Activated T-helper 2 cell treated with anti-CD3 and anti-CD28 coated beads, Interferon-gamma antibody, Interleukin-2, Interleukin-4, amounts not matched to agents 10 μg/mL and 5 μg/mL and 100 μg/mL, durations not matched to agents 14 hours and 24 hours and 36 hours (primary cell): ENCODE measurements at regions of chr6 and their contacts with region 1.

Region 1: GRCh38 chr6:41735427-41736356 is at the start of gene TFEB:
- DNase-seq: peak; percentile 92
- H3K4me3 Mint-ChIP-seq: peak within 1 kb of the TSS; percentile 72
- H3K27ac Mint-ChIP-seq: no peak within 1 kb of the TSS
- H3K4me1 Mint-ChIP-seq: peaks cover 22% of the 10 kb centered on the region
- H3K27me3 Mint-ChIP-seq: no peaks in the 10 kb centered on the region
- total RNA-seq, gene TFEB: 11.2 and 13.4 TPM in 2 replicates

Region 2: DNA sequence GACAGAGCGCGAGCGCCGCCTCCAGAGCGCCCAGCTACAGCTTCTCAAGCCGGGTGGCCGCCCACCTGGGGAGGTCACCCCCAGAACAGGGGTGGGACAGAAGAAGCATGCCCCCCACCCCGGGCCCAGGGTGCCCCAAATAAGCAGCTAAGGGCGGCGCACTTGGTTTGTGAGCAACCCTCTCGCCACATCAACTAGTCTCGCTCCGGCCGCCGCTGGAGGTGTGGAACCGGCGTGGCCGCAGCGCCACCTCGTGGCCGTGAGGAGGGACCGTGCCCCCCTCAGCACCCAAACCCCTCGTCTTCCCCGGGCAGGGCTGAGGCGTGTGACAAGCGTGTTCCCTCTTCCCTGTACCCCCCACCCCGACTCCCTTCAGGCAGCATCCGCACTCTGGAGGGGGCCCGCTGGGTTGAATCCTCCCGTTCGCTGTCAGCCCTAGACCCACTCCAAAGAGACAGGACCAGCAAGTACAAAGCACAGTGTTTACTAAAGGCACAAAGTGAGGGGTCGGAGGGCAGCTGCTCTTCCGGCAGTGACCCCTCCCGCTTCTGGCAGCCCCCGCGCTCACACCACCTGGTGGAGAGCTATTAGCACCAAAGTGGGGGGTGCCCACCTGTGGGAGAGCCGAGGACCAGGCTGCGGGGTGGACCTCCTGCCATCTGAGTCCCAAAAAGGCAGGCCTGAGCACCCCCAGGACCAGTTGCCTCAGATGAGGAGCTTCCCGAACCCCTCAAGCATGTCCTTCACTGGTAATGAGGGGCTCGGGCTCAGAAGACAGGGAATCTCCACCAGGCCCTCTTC is 52.0 kb before region 1 on chr6:
- intact Hi-C with region 1: loop called (anchors 2 kb)
- DNase-seq: peak; percentile 70
- H3K4me3 Mint-ChIP-seq: peak overlapping the region; percentile 81
- H3K27ac Mint-ChIP-seq: peak overlapping the region; percentile 85
- H3K4me1 Mint-ChIP-seq: peaks cover 5% of the 10 kb centered on the region
- H3K27me3 Mint-ChIP-seq: no peaks in the 10 kb centered on the region

Region 3: DNA sequence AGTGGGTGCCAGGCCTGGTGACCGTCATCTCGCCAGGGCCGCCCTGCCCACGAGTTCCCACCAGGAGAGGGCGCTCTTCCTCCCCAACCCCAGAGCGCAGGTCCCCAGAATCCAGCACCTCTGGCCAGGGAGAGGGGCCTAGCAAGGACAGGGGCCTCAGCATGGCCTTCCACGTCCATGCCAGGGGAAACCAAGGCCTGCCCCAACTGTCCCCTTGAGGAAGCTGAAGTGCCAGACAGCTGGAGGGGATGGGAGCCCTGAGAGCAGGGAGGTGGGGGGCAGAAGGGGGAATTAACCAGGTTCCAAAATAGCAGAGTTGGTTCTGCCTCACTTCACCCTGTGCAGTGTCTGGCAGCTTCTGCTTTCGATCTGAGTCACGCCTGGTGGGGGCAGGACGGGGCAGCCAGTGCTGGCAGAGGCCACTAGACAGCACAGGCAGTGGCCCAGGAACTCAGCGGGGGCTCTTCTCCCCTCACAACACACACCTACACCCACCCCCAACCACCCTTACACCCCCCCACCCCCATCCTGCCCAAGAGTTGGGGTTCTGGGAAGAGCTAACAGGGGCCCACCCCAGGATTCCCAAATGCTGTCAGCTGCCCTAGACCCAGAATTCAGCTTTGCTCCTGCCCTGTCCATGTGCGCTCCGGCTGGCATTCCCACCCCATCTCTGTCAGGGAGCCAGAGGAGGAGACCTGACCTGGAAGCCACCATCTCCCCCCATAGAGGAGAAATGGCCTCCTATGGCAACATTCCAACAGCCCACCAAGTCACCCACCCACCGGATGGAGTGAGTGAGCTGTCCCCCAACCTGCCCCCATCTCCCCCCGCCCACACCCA is 29.5 kb before region 1 on chr6:
- intact Hi-C with region 1: loop called (anchors 2 kb)
- DNase-seq: peak; percentile 43
- H3K4me3 Mint-ChIP-seq: no peak overlapping the region
- H3K27ac Mint-ChIP-seq: peak overlapping the region; percentile 43
- H3K4me1 Mint-ChIP-seq: peaks cover 23% of the 10 kb centered on the region
- H3K27me3 Mint-ChIP-seq: no peaks in the 10 kb centered on the region

Region 4: DNA sequence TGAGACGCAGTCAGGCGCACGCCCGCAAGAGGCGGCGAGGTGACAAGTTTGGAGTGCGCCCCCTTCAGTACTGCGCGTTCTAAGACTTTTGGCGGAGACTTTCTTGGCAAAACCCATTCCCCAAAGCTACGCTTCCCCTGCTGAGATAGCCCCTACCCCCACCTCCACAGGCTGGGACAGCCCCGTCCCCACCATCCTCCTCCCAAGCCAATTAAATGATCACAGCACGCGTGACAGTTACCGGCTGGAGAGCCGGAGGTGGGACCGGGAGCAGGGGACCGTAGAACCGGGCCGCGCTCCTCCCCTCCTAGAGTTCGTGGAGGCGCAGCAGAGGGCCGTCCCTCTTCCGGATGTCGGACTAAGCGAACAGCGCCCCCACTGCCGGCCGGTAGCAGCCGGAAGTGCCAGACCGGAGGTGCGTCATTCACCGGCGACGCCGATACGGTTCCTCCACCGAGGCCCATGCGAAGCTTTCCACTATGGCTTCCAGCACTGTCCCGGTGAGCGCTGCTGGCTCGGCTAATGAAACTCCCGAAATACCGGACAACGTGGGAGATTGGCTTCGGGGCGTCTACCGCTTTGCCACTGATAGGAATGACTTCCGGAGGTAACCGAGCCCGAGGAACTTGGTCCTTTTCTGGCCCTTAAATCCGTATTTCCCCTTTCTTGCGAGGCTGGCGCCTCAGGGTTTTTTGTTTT is 51.7 kb after region 1 on chr6 and contains the start of gene TOMM6:
- intact Hi-C with region 1: loop called (anchors 1 kb)
- DNase-seq: peak; percentile 95
- H3K4me3 Mint-ChIP-seq: peak within 1 kb of the TSS; percentile 96
- H3K27ac Mint-ChIP-seq: peak within 1 kb of the TSS; percentile 97
- H3K4me1 Mint-ChIP-seq: peaks cover 15% of the 10 kb centered on the region
- H3K27me3 Mint-ChIP-seq: peaks cover 3% of the 10 kb centered on the region
- total RNA-seq, gene TOMM6: 308 and 316 TPM in 2 replicates

Region 5: GRCh38 chr6:42050266-42051032 is 314.8 kb after region 1 on chr6 and contains the start of gene TAF8:
- intact Hi-C with region 1: loop called (anchors 2 kb)
- DNase-seq: peak; percentile 90
- H3K4me3 Mint-ChIP-seq: peak within 1 kb of the TSS; percentile 94
- H3K27ac Mint-ChIP-seq: peak within 1 kb of the TSS; percentile 98
- H3K4me1 Mint-ChIP-seq: peaks cover 50% of the 10 kb centered on the region
- H3K27me3 Mint-ChIP-seq: no peaks in the 10 kb centered on the region
- total RNA-seq, gene TAF8: 38.8 and 41.9 TPM in 2 replicates